ENCODE measurements at regions of chr1 and their contacts with region 1.

Region 1: DNA sequence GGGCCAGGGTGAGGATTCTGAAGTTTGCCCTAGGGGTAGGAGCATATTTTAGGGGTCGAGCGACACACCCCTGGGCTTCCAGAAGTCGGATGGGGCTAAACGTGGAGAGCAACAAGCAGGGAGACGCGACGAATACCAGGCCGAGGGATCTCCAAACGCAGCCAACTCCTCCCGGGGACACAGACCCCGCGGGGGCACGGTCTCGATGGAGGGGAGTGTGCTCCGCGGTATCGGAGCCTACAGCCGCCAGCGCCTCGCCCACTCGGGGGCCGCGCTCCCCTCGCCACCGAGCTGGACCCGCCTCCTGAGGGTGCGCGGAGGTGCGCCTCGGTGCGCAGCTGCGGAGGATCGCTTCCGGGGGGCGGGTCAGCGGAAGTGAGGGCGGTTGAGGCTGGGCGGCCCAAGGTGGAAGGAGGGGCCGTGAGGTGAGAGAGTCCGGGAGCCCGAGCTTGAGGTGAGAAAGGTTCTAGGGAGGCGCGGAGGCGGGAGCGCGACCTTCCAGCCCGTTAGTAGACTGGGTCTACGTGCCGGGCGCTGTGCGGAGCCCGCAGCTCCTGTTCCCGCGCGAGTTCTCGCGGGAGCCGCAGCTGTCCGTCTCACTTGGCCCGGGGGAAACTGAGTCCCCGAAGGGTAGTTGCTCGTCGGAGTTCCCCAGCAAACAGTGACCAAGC is at the start of gene MTFR1L:
- DNase-seq: peak; percentile 89 to 95 (median 92)
- ATAC-seq: peak; percentile 81 to 82
- H3K4me3 Mint-ChIP-seq: peak within 1 kb of the TSS; percentile 91 to 99 (median 94)
- H3K27ac Mint-ChIP-seq: peak within 1 kb of the TSS; percentile 95 to 99 (median 97)
- H3K4me1 Mint-ChIP-seq: peaks cover 21 to 47% (median 40%) of the 10 kb centered on the region in 4 donors
- H3K27me3 Mint-ChIP-seq: no peaks in the 10 kb centered on the region
- polyA plus RNA-seq, gene MTFR1L: 34.3 to 42.6 (median 40.9) TPM

Region 2: GRCh38 chr1:25247024-25247828 is 572.5 kb before region 1 on chr1 and contains the start of gene RSRP1:
- POLR2A ChIA-PET with region 1: interaction called, 10 read pairs
- DNase-seq: peak; percentile 97 to 100 (median 100)
- ATAC-seq: peak; percentile 80 to 85
- H3K4me3 Mint-ChIP-seq: peak within 1 kb of the TSS; percentile 94 to 100 (median 97)
- H3K27ac Mint-ChIP-seq: peak within 1 kb of the TSS; percentile 99 to 100 (median 100)
- H3K4me1 Mint-ChIP-seq: peaks cover 19 to 59% (median 55%) of the 10 kb centered on the region in 4 donors
- H3K27me3 Mint-ChIP-seq: peaks cover 0 to 4% (median 0%) of the 10 kb centered on the region in 5 donors
- polyA plus RNA-seq, gene RSRP1: 29.8 to 40.5 (median 33.2) TPM

Region 3: DNA sequence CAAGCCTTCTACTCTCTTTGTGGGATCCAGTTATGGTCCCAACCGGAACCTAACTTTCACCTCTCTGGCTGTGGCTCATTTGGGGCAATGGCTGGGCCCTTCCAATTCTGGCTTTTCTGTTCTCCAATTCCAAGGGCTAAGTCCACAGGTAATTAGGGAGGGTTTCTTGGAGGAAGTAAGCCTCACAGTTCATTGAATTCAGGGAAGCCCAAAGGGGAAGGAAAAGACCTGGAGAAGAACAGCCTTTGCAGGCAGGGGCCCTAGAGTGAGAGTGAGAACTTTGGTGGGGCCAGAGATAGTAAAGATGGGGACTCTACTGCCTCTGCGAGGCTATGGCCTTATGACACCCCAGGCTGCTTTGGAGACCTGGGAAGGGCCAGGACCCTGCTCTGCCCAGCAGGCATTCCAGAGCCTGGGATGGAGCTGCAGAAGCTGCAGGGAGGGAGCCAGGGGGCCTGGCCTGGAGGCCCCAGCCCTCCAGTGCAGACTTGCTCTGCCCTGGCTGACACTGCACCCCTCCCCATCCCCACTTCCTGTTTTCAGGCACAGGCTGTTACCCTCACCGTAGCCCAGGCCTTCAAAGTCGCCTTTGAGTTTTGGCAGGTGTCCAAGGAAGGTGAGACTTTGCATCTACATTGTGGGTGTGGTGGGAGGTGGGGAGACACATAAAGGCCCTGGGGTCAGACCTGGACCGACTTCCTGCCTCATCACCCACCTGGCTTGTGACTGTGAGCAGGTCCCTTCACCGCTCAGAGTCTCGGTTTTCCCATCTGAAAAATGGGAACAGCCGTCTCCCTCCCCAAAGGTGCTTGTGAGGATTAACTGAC is 257.4 kb before region 1 on chr1:
- POLR2A ChIA-PET with region 1: interaction called, 10 read pairs
- DNase-seq: peak; percentile 61 to 99 (median 93)
- ATAC-seq: peak; percentile 75 to 83
- H3K4me3 Mint-ChIP-seq: peak overlapping the region; percentile 96 to 100 (median 99)
- H3K27ac Mint-ChIP-seq: peak overlapping the region; percentile 93 to 100 (median 99)
- H3K4me1 Mint-ChIP-seq: peaks cover 34 to 92% (median 78%) of the 10 kb centered on the region in 4 donors
- H3K27me3 Mint-ChIP-seq: no peaks in the 10 kb centered on the region

Region 4: GRCh38 chr1:25771246-25772114 is 48.2 kb before region 1 on chr1:
- POLR2A ChIA-PET with region 1: interaction called, 15 read pairs
- DNase-seq: peak in 9 of 10 donors; percentile 27 to 76 (median 54)
- ATAC-seq: peak; percentile 11 to 12
- H3K4me3 Mint-ChIP-seq: peak overlapping the region; percentile 41 to 88 (median 78)
- H3K27ac Mint-ChIP-seq: peak overlapping the region; percentile 85 to 99 (median 98)
- H3K4me1 Mint-ChIP-seq: peaks cover 59 to 100% (median 83%) of the 10 kb centered on the region in 4 donors
- H3K27me3 Mint-ChIP-seq: peaks cover 0 to 3% (median 0%) of the 10 kb centered on the region in 5 donors

Region 5: DNA sequence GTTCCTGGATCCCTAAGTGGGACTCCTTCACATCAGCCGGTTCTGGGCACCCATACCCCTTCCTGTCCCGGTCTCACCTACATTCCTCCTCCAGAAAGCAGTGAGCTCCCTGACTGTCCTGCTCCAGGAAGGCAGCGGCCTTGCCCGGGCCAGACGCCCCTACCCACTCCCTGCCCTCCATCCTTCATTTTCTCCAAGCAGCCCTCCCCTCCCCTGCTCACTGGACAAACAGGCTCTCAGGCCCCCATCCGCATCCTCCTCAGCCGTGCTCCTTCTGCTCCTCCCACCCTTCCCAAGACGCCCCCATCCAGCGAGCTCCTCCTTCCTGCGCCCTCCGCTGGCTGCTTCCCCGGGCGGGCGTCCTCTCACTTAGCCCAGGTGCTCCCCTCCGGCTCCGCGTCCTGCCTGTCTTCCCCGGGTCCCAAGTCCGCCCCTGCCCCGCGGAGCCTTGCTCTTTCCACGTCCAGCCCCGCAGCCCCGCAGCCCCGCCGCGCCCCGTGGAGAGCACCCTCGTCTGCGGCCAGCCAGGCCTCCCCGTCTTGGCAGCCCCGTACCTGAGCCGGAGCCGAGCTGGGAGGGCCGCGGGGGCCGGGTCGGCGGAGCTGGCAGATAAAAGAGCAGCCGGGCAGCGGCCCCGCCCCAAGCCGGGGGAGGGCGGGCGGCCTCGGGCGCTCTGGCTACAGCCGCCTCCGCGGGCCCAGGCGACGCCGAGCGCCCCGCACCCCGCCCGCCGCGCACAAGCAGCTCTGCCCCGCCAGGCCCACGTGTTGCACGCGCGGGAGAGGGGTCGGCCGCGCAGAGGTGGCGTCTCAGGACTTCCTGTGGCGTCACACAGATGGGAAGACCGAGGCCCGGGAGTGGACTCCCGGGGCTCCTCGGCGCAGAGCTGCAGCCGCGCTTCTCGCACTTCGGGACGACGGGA is 55.5 kb after region 1 on chr1 and contains the start of gene PAQR7:
- POLR2A ChIA-PET with region 1: interaction called, 30 read pairs
- DNase-seq: peak; percentile 32 to 82 (median 60)
- ATAC-seq: peak; percentile 84 to 91
- H3K4me3 Mint-ChIP-seq: peak within 1 kb of the TSS; percentile 81 to 89 (median 85)
- H3K27ac Mint-ChIP-seq: peak within 1 kb of the TSS; percentile 31 to 92 (median 86)
- H3K4me1 Mint-ChIP-seq: peaks cover 5 to 31% (median 17%) of the 10 kb centered on the region in 4 donors
- H3K27me3 Mint-ChIP-seq: no peaks in the 10 kb centered on the region
- polyA plus RNA-seq, gene PAQR7: 0.08 to 0.32 (median 0.30) TPM